Ovary (tissue), 10 donors: ENCODE measurements at regions of chr14 and their contacts with region 1.

Region 1: DNA sequence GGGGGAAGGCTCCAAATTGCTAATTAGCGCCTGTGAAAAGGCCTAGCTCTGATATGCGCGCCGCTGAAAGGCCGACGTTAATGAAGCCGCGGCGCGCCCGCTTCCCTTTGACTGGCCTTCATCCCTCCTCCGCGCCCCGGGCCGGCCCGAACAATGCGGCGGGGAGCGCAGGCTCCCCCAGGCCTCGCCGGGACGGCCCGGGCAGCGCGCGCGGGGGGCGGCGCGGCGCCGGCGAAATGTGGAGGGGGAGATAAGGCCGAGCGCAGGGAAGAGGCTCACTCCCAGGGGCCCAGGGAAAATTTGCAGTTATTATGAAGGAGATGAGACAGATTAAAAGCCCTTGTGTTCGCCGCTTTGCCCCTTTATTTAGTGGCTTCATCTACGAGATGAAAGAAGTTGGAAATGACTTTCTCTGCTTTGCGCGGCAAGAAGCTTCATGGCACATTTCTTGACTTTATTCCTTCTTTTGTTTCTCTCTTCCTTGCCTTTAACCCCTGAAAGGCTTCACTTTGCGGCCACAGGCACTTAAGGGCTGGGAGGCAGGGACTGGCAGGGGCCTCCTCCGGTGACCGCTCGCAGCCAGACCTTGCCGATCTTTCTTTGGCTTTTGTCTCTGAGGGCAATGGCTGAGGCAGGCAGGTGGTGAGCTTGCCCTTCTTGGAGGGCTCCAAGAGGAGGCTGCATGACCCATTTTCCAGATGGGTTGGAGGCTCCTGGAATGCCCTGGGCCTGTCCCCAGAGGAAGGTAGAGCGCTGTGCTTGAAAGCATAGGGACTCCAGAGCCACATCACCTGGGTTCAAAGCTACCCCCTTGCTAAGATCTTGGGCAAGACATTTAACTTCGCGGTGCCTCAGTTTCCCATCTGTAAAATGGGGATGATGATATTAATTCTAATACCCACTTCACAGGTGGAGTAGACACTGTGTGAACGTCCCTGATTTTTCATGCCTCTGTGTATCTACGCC is 12.7 kb upstream of the GPATCH2L start:
- DNase-seq: no peak
- H3K4me3 ChIP-seq: peak overlapping the region; percentile 6
- H3K27ac ChIP-seq: no peak overlapping the region
- H3K4me1 ChIP-seq: no peaks in the 10 kb centered on the region
- H3K27me3 ChIP-seq: no peaks in the 10 kb centered on the region
- CTCF ChIP-seq: no peak
- EP300 ChIP-seq: no peak
- POLR2A ChIP-seq: no peak

Region 2: GRCh38 chr14:76050797-76051392 is 88.1 kb before region 1 on chr14:
- intact Hi-C with region 1: loop called in 1 of 4 experiments (anchors 5 kb)
- DNase-seq: peak in 4 of 5 donors; percentile 15 to 66 (median 38)
- H3K4me3 ChIP-seq: no peak overlapping the region
- H3K27ac ChIP-seq: no peak overlapping the region
- H3K4me1 ChIP-seq: peaks cover 2% of the 10 kb centered on the region
- H3K27me3 ChIP-seq: no peaks in the 10 kb centered on the region
- CTCF ChIP-seq: peak; percentile 44 to 72 (median 63)
- EP300 ChIP-seq: no peak
- POLR2A ChIP-seq: no peak

Region 3: GRCh38 chr14:76090616-76091391 is 48.2 kb before region 1 on chr14:
- intact Hi-C with region 1: no loop called
- DNase-seq: no peak
- H3K4me3 ChIP-seq: no peak overlapping the region
- H3K27ac ChIP-seq: no peak overlapping the region
- H3K4me1 ChIP-seq: peaks cover 11% of the 10 kb centered on the region
- H3K27me3 ChIP-seq: no peaks in the 10 kb centered on the region
- CTCF ChIP-seq: no peak
- EP300 ChIP-seq: no peak
- POLR2A ChIP-seq: no peak